PC-3 (cell line): ENCODE measurements at regions of chr19 and their contacts with region 1.

Region 1: DNA sequence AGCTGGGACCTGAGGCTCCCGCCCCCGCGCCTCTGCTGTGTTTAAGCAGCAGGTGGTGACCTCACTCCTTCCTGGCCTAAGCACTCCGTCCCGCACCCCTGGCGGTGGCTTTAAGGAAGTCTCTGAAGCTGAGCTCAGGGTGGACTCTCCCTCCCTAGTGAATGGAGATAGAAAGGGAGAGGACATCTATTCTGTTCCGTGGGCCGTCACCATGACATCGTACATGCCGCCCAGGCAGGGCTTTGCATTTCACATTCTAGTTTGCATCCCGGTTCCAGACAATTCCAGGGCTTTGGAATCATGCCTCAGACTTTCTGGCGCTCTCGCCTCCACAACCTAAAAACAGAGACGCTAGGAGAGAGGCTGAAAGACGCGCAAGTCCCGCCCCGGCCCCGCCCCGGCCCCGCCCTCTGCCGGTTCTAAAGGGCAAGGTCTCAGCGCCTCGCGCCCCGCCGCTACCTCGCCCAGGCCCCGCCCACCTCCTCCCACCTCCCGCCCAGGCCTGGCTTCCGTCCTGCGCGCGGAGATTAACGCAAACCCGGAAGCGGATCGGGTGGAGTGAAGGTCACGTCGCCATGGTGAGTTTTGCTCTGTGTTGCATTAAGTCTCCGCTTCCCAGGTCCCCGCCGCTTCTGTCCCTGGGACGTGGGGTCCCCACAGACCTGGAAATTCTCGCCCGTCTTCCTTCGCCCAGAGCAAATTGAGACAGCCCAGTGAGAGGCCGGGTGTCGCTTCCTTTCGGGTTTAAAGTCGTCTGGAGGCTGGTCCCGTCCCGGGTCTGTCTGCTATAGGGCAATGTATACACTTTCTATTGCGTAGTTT is at the start of gene ZNF808:
- DNase-seq: peak; percentile 93
- ATAC-seq: peak; percentile 91
- H3K4me3 ChIP-seq: peak within 1 kb of the TSS; percentile 98
- H3K27ac ChIP-seq: peak within 1 kb of the TSS; percentile 63
- H3K4me1 ChIP-seq: 0 out of 2 replicates have a peak, but pooled peaks cover 10% of the 10 kb centered on the region
- H3K27me3 ChIP-seq: no peaks in the 10 kb centered on the region
- CTCF ChIP-seq: peak; percentile 71
- total RNA-seq, gene ZNF808: 9.4 and 14.3 TPM in 2 replicates

Region 2: DNA sequence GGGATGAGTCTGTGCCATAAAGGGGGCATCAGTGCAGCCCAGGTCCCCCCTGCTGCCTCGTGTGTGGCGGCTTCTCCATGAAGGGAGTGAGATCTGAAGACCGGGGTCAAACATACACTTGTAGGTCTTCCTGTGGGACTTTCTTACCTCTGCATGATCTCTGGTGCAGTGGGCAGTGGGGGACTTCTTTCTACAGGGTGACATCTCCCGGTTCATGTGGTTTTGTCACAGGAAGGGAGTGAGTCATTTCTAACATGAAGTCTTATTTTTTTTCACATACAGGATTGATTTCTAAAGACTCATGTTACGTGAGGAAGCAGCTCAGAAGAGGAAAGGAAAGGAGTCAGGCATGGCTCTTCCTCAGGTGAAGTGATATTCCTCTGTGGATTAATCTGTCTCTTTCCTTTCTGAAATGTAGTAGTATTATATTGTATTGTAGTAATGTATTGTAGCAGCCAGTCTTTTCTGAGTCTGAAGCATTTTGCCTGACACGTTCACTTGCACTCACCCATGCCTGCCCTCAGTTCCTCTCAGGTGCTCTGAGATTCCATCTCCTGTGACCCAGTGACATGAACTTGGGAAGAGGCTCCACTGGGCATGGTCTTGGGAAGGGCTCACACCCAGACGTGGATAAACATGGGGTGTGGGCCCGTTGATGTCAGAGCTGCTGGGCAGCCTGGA is 15.8 kb after region 1 on chr19:
- CTCF ChIA-PET with region 1: no interaction called
- POLR2A ChIA-PET with region 1: no interaction called
- intact Hi-C with region 1: no loop called
- DNase-seq: peak; percentile 11
- ATAC-seq: no peak; the same call in 1 of the 2 replicates
- H3K4me3 ChIP-seq: no peak overlapping the region
- H3K27ac ChIP-seq: no peak overlapping the region
- H3K4me1 ChIP-seq: no peaks in the 10 kb centered on the region; the same call in 1 of the 2 replicates
- H3K27me3 ChIP-seq: no peaks in the 10 kb centered on the region
- CTCF ChIP-seq: no peak

Region 3: DNA sequence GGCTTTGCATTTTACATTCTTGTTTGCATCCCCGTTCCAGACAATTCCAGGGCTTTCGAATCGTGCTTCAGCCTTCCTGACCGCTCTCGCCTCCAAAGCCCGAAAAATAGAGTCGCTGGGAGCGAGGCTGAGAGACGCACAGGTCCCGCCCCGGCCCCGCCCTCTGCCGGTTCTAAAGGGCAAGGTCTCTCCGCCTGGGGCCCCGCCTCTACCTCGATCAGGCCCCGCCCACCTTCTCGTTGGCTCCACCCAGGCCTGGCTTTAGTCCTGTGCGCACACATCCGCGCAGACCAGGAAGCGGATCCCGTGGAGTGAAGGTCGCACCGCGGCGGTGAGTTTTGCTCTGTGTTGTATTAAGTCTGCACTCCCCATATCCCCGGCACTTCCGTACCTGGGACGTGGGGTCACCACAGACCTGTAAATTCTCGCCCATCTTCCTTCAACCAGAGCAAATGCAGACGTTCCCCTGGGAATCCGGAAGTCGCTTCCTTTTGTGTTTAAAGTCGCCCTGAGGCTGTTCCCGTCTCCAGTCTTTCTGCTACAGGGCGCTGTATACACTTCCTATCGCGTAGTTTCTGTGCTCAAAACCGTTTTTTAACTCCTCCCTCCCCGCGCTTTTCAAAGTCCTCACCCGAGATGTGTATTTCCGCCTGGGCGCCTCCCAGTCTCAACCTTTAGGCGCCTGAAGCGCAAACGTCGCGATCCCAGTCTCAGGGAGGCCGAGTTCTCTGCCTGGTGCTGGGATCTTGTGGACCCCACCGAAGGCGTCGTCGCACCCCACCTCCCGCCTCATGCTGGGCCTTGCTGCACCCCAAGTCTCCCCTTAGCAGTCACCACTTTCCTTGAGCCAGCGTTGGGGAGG is 42.9 kb after region 1 on chr19 and contains the start of gene ZNF701:
- CTCF ChIA-PET with region 1: interaction called, 7 read pairs
- POLR2A ChIA-PET with region 1: no interaction called
- intact Hi-C with region 1: loop called (anchors 1 kb)
- DNase-seq: peak; percentile 90
- ATAC-seq: peak; percentile 92
- H3K4me3 ChIP-seq: peak within 1 kb of the TSS; percentile 84
- H3K27ac ChIP-seq: peak within 1 kb of the TSS; percentile 69
- H3K4me1 ChIP-seq: peaks cover 11% of the 10 kb centered on the region
- H3K27me3 ChIP-seq: no peaks in the 10 kb centered on the region
- CTCF ChIP-seq: no peak
- total RNA-seq, gene ZNF701: 13.2 and 14.6 TPM in 2 replicates

Region 4: GRCh38 chr19:52601025-52601973 is 74.0 kb after region 1 on chr19:
- CTCF ChIA-PET with region 1: no interaction called
- POLR2A ChIA-PET with region 1: no interaction called
- intact Hi-C with region 1: no loop called
- DNase-seq: peak; percentile 93
- ATAC-seq: peak; percentile 92
- H3K4me3 ChIP-seq: peak overlapping the region; percentile 76
- H3K27ac ChIP-seq: no peak overlapping the region
- H3K4me1 ChIP-seq: peaks cover 11% of the 10 kb centered on the region; the same call in 1 of the 2 replicates
- H3K27me3 ChIP-seq: no peaks in the 10 kb centered on the region
- CTCF ChIP-seq: peak; percentile 28; the same call in 1 of the 2 replicates

Region 5: GRCh38 chr19:52748336-52748950 is 221.1 kb after region 1 on chr19:
- CTCF ChIA-PET with region 1: no interaction called
- POLR2A ChIA-PET with region 1: no interaction called
- intact Hi-C with region 1: loop called (anchors 1 kb)
- DNase-seq: peak; percentile 67
- ATAC-seq: peak; percentile 62
- H3K4me3 ChIP-seq: no peak overlapping the region
- H3K27ac ChIP-seq: no peak overlapping the region
- H3K4me1 ChIP-seq: no peaks in the 10 kb centered on the region
- H3K27me3 ChIP-seq: no peaks in the 10 kb centered on the region
- CTCF ChIP-seq: peak; percentile 73